Colonic mucosa (tissue), 4 donors: ENCODE measurements at regions of chr11 and their contacts with region 1.

Region 1: DNA sequence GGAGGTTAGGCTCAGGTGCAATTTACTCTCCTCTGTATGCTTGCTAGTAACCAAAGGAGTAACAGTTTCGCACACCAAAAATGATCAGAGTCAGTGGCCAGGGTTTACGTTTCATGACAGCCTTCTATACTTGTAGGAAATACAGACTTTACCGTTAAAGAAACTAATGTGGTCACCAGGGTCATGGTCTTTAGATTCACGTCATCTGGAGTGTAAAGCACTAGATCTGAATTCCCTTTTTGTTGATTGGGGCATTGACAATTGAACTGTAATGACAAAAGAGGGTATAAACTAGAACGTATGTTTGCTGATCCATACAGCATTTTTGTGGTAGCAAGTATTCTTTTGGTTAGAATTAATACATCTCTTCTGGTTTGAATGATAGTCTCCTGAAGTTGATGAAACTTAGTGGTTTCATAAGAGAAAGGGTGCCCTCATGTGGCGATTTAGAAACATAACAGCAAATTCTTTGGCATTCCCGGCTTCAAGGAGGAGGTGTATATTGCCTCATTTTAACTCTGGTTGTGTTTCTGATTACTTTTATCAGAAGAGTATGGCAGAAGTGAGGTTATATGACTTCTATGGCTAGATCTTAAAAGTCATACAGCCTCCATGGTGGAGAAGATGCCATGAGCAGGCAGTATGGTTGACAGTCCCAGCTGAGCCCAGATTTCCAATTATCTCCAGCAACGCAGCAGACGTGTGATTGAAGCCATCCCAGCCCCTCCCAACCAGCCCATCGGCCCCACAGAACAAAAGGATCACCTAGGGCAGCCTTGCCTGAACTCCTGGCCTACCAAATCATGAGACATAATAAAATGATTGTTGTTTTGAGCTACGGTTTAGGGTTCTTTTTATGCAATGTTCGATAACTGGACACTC is 35.1 kb downstream of the MMP7 start:
- DNase-seq: peak; percentile 63
- H3K4me3 ChIP-seq: no peak overlapping the region
- H3K27ac ChIP-seq: no peak overlapping the region
- H3K4me1 ChIP-seq: no peaks in the 10 kb centered on the region
- H3K27me3 ChIP-seq: no peaks in the 10 kb centered on the region
- CTCF ChIP-seq: peak; percentile 48

Region 2: GRCh38 chr11:102341844-102342318 is 153.5 kb before region 1 on chr11:
- intact Hi-C with region 1: loop called (anchors 5 kb)
- DNase-seq: peak; percentile 84
- H3K4me3 ChIP-seq: no peak overlapping the region
- H3K27ac ChIP-seq: no peak overlapping the region
- H3K4me1 ChIP-seq: no peaks in the 10 kb centered on the region
- H3K27me3 ChIP-seq: no peaks in the 10 kb centered on the region
- CTCF ChIP-seq: peak; percentile 76

Region 3: GRCh38 chr11:102390667-102391465 is 104.5 kb before region 1 on chr11:
- intact Hi-C with region 1: loop called (anchors 2 kb)
- DNase-seq: peak; percentile 72
- H3K4me3 ChIP-seq: no peak overlapping the region
- H3K27ac ChIP-seq: no peak overlapping the region
- H3K4me1 ChIP-seq: no peaks in the 10 kb centered on the region
- H3K27me3 ChIP-seq: no peaks in the 10 kb centered on the region
- CTCF ChIP-seq: peak; percentile 91

Region 4: DNA sequence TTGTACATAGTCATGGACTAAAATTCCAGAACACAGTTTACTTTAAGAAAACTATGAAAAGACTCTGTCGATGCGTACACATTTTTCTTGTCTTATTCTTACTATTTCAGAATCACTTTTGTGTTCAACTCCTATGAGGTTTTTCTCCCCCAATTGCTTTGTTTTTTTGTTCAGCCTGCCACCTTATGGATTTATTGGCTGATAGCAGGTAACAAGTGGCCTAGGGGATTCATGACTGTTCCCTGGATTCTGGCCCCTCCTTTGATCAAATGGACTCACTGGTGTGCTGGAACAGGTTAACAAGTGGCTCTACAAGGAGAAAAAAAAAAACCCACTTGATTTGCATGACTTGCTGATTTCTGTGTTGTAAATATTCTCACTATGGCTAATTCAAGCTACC is 119.1 kb after region 1 on chr11:
- intact Hi-C with region 1: loop called (anchors 10 kb)
- DNase-seq: no peak
- H3K4me3 ChIP-seq: no peak overlapping the region
- H3K27ac ChIP-seq: no peak overlapping the region
- H3K4me1 ChIP-seq: no peaks in the 10 kb centered on the region
- H3K27me3 ChIP-seq: no peaks in the 10 kb centered on the region
- CTCF ChIP-seq: no peak

Region 5: GRCh38 chr11:102666331-102666957 is 171.0 kb after region 1 on chr11:
- intact Hi-C with region 1: loop called (anchors 10 kb)
- DNase-seq: peak; percentile 31
- H3K4me3 ChIP-seq: no peak overlapping the region
- H3K27ac ChIP-seq: no peak overlapping the region
- H3K4me1 ChIP-seq: no peaks in the 10 kb centered on the region
- H3K27me3 ChIP-seq: no peaks in the 10 kb centered on the region
- CTCF ChIP-seq: peak; percentile 80